WTC11 (cell line): ENCODE measurements at regions of chr20 and their contacts with region 1.

Region 1: GRCh38 chr20:39049684-39050554 is 87.8 kb downstream of the DHX35 start:
- DNase-seq: peak; percentile 88
- ATAC-seq: peak; percentile 81
- H3K4me3 Mint-ChIP-seq: peak overlapping the region; percentile 78
- H3K27ac Mint-ChIP-seq: no peak overlapping the region
- H3K4me1 Mint-ChIP-seq: peaks cover 4% of the 10 kb centered on the region; the same call in 1 of the 2 replicates
- H3K27me3 Mint-ChIP-seq: peaks cover 18% of the 10 kb centered on the region
- CTCF ChIP-seq: peak; percentile 98

Region 2: DNA sequence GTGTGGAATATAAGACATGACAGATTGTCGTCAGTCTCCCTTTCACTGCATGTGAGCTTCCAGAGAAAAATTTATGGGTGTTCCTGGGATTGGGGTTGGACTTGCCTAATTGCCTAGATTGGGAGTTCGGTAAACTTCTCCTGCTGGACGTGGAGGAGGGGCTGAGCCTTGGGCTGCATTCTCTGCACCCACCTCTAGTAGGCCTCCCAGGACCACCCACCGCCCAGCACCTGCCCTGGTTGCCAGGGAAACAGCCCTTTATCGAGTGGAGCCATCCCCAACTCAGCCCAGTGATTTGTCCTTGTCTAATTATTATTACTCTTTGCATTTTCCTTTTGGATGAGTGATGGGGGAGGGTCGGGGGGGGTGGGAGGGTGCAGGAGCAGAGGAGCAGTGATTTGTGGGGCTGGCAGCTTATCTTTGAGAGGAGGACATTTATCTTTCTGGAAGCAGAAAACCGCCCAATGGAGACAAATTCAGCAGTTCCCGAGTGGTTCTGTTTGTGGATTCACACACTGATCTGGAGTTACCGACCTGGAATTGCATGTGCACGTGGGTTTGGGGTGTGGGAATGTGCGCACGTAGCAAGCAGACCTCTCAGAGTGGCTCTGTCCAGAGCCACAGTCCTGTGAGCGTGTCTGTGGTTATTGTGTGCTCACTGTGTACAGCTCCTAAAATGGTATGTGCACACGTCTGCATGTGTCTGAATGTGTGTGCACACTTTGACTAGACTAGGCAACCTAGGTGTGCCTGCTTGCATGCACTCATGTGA is 16.7 kb after region 1 on chr20:
- CTCF ChIA-PET with region 1: interaction called, 27 read pairs
- POLR2A ChIA-PET with region 1: no interaction called
- DNase-seq: peak; percentile 87
- ATAC-seq: peak; percentile 98
- H3K4me3 Mint-ChIP-seq: no peak overlapping the region
- H3K27ac Mint-ChIP-seq: no peak overlapping the region
- H3K4me1 Mint-ChIP-seq: no peaks in the 10 kb centered on the region
- H3K27me3 Mint-ChIP-seq: peaks cover 10% of the 10 kb centered on the region
- CTCF ChIP-seq: peak; percentile 41; the same call in 1 of the 2 replicates

Region 3: GRCh38 chr20:39075731-39076130 is 25.8 kb after region 1 on chr20:
- CTCF ChIA-PET with region 1: interaction called, 47 read pairs
- POLR2A ChIA-PET with region 1: no interaction called
- DNase-seq: no peak
- ATAC-seq: no peak
- H3K4me3 Mint-ChIP-seq: no peak overlapping the region
- H3K27ac Mint-ChIP-seq: no peak overlapping the region
- H3K4me1 Mint-ChIP-seq: peaks cover 6% of the 10 kb centered on the region; the same call in 1 of the 2 replicates
- H3K27me3 Mint-ChIP-seq: peaks cover 8% of the 10 kb centered on the region; the same call in 1 of the 2 replicates
- CTCF ChIP-seq: no peak

Region 4: GRCh38 chr20:39081255-39081654 is 31.3 kb after region 1 on chr20:
- CTCF ChIA-PET with region 1: interaction called, 47 read pairs
- POLR2A ChIA-PET with region 1: no interaction called
- DNase-seq: peak; percentile 89
- ATAC-seq: peak; percentile 88
- H3K4me3 Mint-ChIP-seq: no peak overlapping the region
- H3K27ac Mint-ChIP-seq: no peak overlapping the region
- H3K4me1 Mint-ChIP-seq: peaks cover 6% of the 10 kb centered on the region; the same call in 1 of the 2 replicates
- H3K27me3 Mint-ChIP-seq: peaks cover 19% of the 10 kb centered on the region
- CTCF ChIP-seq: peak; percentile 88

Region 5: GRCh38 chr20:39124064-39124463 is 74.1 kb after region 1 on chr20:
- CTCF ChIA-PET with region 1: interaction called, 10 read pairs
- POLR2A ChIA-PET with region 1: no interaction called
- DNase-seq: no peak
- ATAC-seq: no peak
- H3K4me3 Mint-ChIP-seq: no peak overlapping the region
- H3K27ac Mint-ChIP-seq: no peak overlapping the region
- H3K4me1 Mint-ChIP-seq: peaks cover 29% of the 10 kb centered on the region
- H3K27me3 Mint-ChIP-seq: peaks cover 48% of the 10 kb centered on the region
- CTCF ChIP-seq: no peak